ENCODE measurements at regions of chr18 and their contacts with region 1.

Region 1: GRCh38 chr18:6482198-6482977 is 67.7 kb upstream of the L3MBTL4 start:
- H3K4me3 ChIP-seq: no peak overlapping the region
- H3K27ac ChIP-seq: no peak overlapping the region
- H3K4me1 ChIP-seq: 0 out of 2 replicates have a peak, but pooled peaks cover 2% of the 10 kb centered on the region
- CTCF ChIP-seq: peak; percentile 92

Region 2: GRCh38 chr18:5868218-5869115 is 613.9 kb before region 1 on chr18:
- CTCF ChIA-PET with region 1: interaction called, 13 read pairs
- POLR2A ChIA-PET with region 1: no interaction called
- H3K4me3 ChIP-seq: no peak overlapping the region
- H3K27ac ChIP-seq: no peak overlapping the region
- H3K4me1 ChIP-seq: no peaks in the 10 kb centered on the region
- CTCF ChIP-seq: peak; percentile 52

Region 3: GRCh38 chr18:6504605-6505497 is 22.5 kb after region 1 on chr18:
- CTCF ChIA-PET with region 1: no interaction called
- POLR2A ChIA-PET with region 1: no interaction called
- H3K4me3 ChIP-seq: no peak overlapping the region
- H3K27ac ChIP-seq: no peak overlapping the region
- H3K4me1 ChIP-seq: peaks cover 10% of the 10 kb centered on the region
- CTCF ChIP-seq: no peak

Region 4: DNA sequence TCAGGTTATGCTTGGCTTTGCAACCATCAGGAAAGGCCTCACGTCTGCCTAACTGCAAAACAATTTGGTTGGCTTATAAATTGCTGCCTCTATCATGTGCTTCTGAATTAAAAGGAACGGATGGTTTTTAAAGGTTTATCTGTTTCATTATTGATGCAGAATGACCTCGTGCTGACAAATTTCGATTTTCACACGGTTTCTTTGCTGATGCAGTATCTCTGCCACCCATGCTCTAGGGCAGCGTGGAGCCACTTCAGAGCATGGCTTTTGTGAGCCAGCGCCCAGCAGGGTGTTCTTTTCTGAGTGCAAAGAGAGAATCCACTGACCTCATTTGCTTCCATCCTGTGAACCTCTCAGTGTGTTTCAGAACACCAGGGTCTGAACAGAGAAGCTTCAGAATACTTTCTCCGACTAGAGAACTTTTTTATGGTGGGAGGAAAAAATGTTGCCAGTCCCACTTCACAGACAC is 75.4 kb after region 1 on chr18:
- CTCF ChIA-PET with region 1: no interaction called
- POLR2A ChIA-PET with region 1: no interaction called
- H3K4me3 ChIP-seq: no peak overlapping the region
- H3K27ac ChIP-seq: no peak overlapping the region
- H3K4me1 ChIP-seq: peaks cover 15% of the 10 kb centered on the region
- CTCF ChIP-seq: no peak